Dendritic cell treated with granulocyte-macrophage colony-stimulating factor and Interleukin-4, amounts not matched to agents 40 ng/mL and 50 ng/mL, for 4 days (primary cell): ENCODE measurements at regions of chr2 and their contacts with region 1.

Region 1: GRCh38 chr2:11743846-11744553 is 2.4 kb upstream of the LPIN1 start:
- H3K4me3 Mint-ChIP-seq: peak overlapping the region; percentile 45
- H3K27ac Mint-ChIP-seq: peak overlapping the region; percentile 82
- H3K4me1 Mint-ChIP-seq: peaks cover 64% of the 10 kb centered on the region
- H3K27me3 Mint-ChIP-seq: peaks cover 12% of the 10 kb centered on the region

Region 2: GRCh38 chr2:11344342-11344955 is 399.6 kb before region 1 on chr2 and contains the start of gene ROCK2:
- intact Hi-C with region 1: loop called (anchors 10 kb)
- H3K4me3 Mint-ChIP-seq: peak within 1 kb of the TSS; percentile 87
- H3K27ac Mint-ChIP-seq: peak within 1 kb of the TSS; percentile 92
- H3K4me1 Mint-ChIP-seq: peaks cover 22% of the 10 kb centered on the region
- H3K27me3 Mint-ChIP-seq: no peaks in the 10 kb centered on the region

Region 3: DNA sequence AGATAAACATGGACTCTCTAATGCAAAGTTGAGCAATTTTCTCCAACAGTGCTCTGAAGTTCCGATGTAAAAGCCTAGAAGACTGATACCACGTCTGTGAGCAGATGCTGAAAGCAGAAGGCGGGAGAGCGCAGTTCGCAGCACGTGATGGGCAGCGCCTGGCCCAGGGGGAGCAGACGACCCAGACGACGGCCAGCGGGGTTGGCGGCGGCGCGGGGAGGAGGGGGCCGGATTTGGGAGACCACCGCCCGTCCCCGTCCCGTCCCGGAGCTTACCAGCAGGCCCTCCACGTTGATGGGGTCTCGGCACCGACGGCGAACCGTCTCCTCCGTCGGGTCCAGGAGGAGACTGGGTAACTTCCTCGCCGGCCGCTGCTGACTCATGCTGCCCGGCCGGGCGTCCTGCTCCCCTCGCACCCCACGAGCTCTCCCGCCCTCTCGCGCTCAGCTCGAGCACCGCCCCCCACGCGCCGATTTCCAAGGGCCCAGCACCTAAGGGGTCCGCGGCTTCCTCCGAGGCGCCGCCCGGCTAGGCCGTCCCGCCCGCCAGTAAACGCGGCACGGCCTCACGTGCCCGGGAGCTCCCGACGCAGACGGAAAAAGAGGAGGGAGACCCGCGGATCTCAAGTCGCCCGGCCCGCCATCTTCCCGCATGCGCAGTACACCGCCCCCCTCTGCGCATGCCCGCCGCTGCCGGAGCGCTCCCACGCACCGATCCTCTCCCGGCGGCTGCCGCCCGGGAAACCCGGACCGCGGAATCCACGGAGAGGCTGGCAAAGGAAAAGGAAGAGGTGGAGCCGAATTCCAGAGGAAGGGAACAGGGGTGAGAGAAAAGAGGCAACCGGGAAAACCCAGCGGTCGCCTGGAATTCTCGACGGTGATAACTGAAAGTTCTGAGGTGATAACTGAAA is 278.2 kb before region 1 on chr2 and contains the start of gene E2F6:
- intact Hi-C with region 1: loop called (anchors 10 kb)
- H3K4me3 Mint-ChIP-seq: peak within 1 kb of the TSS; percentile 97
- H3K27ac Mint-ChIP-seq: peak within 1 kb of the TSS; percentile 96
- H3K4me1 Mint-ChIP-seq: peaks cover 38% of the 10 kb centered on the region
- H3K27me3 Mint-ChIP-seq: no peaks in the 10 kb centered on the region

Region 4: DNA sequence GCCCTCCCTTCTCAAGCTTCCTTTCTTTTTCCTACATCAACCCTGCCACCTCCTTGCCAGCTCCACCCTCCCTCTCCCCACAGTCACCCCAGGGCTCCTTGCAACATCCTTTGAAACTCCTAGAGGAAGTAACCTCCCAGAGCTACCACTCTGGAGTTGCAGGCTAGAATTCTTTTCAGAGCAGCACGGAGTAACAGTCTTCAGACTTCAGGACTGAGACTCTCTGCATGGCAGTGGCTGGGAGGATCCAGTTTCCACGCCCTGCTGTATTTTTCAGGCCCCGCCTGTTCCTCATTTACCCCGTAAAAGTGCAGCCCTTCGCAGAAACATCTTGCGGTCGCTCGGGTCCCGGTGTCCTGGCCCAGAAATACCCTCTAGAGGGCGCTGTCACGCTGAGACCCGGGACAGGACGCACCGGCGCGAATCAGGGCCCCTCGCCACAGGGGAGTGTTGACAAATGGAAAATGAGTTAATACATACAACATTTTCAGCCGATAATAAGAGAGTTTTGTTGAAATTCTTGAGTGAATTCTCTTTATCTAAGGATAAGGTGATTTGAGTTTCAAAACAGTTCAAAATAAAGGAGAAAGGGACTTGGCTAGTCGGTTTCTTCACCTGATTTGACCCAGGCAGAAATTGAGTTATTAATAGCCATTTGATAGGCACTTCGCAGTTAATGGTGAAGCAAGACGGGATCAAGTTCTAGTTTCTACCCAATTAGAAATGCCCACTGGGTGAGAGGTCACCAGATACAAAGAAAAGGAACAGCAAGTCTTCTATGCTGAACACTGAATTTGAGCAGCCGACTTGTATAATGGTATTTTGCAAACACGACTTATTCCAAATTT is 55.6 kb before region 1 on chr2:
- intact Hi-C with region 1: loop called (anchors 1 kb)
- H3K4me3 Mint-ChIP-seq: peak overlapping the region; percentile 72
- H3K27ac Mint-ChIP-seq: peak overlapping the region; percentile 88
- H3K4me1 Mint-ChIP-seq: peaks cover 51% of the 10 kb centered on the region
- H3K27me3 Mint-ChIP-seq: peaks cover 26% of the 10 kb centered on the region

Region 5: DNA sequence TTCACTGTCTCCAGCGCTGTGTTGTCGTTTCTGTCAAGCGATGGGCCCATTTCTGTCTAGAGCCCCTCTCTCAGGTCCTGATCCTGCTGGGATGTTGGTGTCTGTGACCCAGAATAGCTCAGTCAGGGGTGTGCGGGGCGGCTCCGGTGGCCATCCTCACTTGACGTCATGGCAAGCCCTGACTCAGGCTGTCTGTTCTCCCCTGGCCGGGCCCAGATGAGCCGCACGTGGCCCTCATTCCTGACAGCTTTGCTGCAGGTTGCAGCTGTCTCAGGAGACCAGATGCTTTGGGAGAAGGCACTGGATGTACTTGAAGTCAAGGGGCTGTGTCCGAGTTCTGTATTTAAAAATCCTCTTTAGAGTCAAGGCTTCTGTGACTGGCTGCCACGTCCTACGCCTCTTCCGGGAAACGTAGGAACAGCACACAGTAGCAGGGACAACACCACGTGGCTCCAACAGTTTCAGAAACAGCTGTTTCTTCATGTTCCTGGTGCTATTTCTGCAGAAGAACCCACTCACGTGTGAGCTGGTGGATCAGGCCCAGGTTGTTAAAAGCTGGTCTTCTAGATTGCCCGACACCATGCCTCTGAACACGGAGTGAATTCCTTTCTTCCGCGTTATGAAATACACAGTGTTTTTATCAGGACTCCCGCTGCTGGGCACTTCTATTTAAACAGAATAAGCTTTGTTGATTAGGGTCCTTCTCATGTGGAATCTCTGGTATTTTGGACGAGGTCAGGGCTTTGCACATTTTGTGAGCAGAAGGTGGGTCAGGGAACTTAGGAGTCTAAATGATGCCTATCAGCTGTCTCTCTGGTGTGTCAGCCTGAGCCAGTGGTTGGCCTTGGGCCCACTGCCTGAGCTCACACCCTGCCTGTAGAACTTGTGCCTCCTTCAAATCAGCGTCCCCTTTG is 45.7 kb before region 1 on chr2:
- intact Hi-C with region 1: loop called (anchors 2 kb)
- H3K4me3 Mint-ChIP-seq: no peak overlapping the region
- H3K27ac Mint-ChIP-seq: peak overlapping the region; percentile 86
- H3K4me1 Mint-ChIP-seq: peaks cover 38% of the 10 kb centered on the region
- H3K27me3 Mint-ChIP-seq: peaks cover 10% of the 10 kb centered on the region

Region 6: GRCh38 chr2:11796190-11797171 is 52.5 kb after region 1 on chr2:
- intact Hi-C with region 1: no loop called
- H3K4me3 Mint-ChIP-seq: no peak overlapping the region
- H3K27ac Mint-ChIP-seq: no peak overlapping the region
- H3K4me1 Mint-ChIP-seq: no peaks in the 10 kb centered on the region
- H3K27me3 Mint-ChIP-seq: no peaks in the 10 kb centered on the region